ENCODE measurements at regions of chr6 and their contacts with region 1.

Region 1: GRCh38 chr6:107957909-107958688 is at the start of gene SEC63:
- DNase-seq: peak; percentile 97

Region 2: GRCh38 chr6:107941627-107942026 is 16.5 kb before region 1 on chr6:
- CTCF ChIA-PET with region 1: no interaction called
- POLR2A ChIA-PET with region 1: interaction called, 15 read pairs
- DNase-seq: no peak